Activated B cell treated with CpG ODN at 0.5 μM for 24 hours (primary cell): ENCODE measurements at regions of chr2 and their contacts with region 1.

Region 1: GRCh38 chr2:241734467-241735208 is at the start of gene D2HGDH:
- DNase-seq: peak; percentile 97
- ATAC-seq: peak; percentile 94
- H3K4me3 Mint-ChIP-seq: peak within 1 kb of the TSS; percentile 82
- H3K27ac Mint-ChIP-seq: peak within 1 kb of the TSS; percentile 75
- H3K4me1 Mint-ChIP-seq: peaks cover 57% of the 10 kb centered on the region
- H3K27me3 Mint-ChIP-seq: no peaks in the 10 kb centered on the region
- CTCF ChIP-seq: no peak
- total RNA-seq, gene D2HGDH: 37.7 and 55.4 TPM in 2 replicates

Region 2: DNA sequence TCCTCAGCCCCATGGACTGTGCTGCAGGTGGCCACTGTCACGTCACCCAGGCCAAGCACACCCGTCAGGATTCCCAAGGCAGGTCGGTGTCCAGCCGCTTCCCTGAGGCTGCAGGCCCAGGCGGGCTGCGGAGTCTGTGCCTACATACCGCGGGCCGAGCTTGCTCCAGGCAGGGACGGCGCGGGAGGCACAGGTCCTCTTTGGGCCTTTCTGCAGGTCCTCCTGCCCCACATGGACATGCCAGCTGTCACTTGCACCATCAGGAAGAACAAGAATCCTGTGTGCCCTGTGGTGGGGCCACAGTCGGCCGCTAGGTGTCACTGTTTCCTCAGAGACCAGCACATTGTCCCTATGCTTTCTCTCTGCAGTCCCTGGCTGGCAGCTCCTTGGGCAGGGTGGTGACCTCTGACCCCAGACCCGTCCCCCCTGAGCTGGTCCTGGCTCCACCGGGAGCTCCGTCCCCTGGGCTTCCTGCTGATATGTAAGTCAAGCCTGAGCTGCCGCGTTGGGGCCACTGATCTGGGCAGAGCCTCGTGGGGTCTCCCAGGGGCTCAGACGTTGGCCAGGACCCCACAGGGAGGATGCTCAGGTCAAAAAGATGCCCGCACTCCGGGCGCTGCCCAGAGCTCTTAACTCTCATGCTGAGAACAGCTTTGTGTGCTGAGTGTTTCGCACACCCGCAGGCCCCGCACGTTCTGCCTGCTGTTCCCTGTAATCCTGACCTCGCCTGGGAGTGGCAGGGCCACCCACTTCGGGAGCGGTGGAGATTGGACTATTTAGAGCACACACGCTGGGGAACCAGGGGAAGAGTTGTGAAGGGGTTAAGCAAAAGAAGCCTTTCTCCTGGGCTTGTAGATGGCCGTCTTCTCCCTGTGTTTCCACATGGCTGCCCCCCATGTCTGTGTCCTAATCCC is 883.3 kb before region 1 on chr2:
- CTCF ChIA-PET with region 1: no interaction called
- POLR2A ChIA-PET with region 1: no interaction called
- intact Hi-C with region 1: loop called (anchors 5 kb)
- DNase-seq: peak; percentile 75
- ATAC-seq: peak; percentile 86
- H3K4me3 Mint-ChIP-seq: no peak overlapping the region
- H3K27ac Mint-ChIP-seq: no peak overlapping the region
- H3K4me1 Mint-ChIP-seq: no peaks in the 10 kb centered on the region
- H3K27me3 Mint-ChIP-seq: no peaks in the 10 kb centered on the region
- CTCF ChIP-seq: peak; percentile 65

Region 3: DNA sequence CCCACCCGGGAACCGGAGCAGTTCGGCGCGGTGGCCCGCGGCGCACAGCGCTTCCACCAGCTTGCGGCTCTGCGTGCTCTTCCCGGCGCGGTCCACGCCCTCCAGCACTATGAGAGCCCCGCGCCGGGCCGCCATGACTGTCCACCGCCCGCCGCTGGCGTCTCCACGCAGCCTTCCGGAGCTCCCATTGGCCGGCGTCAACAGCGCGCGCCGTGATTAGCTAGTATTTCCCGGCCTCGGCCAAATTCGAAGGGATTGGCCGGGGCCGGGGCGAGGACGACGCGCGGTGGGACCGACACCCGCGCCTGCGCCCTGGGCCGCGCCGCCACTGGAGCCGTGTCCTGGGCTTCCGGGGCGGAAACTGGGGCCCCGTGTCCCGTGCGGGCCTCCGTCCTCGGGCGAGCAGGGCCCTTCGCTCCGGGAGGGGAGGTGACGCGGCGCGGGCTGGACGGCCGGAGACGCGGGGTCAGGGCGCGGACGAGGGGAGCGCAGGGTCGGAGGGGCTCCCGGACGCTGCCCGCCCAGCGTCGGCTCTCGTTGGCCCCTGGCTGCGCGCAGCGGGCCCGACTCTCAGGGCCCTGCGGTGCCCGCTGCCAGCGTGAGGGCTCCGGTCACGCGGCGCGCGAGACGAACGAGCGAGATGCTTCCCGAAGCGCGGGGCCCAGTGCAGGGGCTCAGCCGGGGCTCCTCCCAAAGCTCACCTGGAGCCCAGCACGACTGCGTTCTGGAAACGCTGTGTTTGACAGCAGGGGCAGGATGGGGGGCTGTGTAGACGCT is 47.8 kb before region 1 on chr2 and contains the start of gene DTYMK:
- CTCF ChIA-PET with region 1: no interaction called
- POLR2A ChIA-PET with region 1: interaction called, 15 read pairs
- intact Hi-C with region 1: loop called (anchors 1 kb)
- DNase-seq: peak; percentile 99
- ATAC-seq: peak; percentile 95
- H3K4me3 Mint-ChIP-seq: peak within 1 kb of the TSS; percentile 80
- H3K27ac Mint-ChIP-seq: peak within 1 kb of the TSS; percentile 87
- H3K4me1 Mint-ChIP-seq: peaks cover 28% of the 10 kb centered on the region
- H3K27me3 Mint-ChIP-seq: no peaks in the 10 kb centered on the region
- CTCF ChIP-seq: no peak
- total RNA-seq, gene DTYMK: 29.2 and 34.7 TPM in 2 replicates

Region 4: GRCh38 chr2:241774646-241775222 is 40.1 kb after region 1 on chr2:
- CTCF ChIA-PET with region 1: no interaction called
- POLR2A ChIA-PET with region 1: interaction called, 4 read pairs
- intact Hi-C with region 1: loop called (anchors 5 kb)
- DNase-seq: no peak
- ATAC-seq: no peak
- H3K4me3 Mint-ChIP-seq: no peak overlapping the region
- H3K27ac Mint-ChIP-seq: no peak overlapping the region
- H3K4me1 Mint-ChIP-seq: peaks cover 14% of the 10 kb centered on the region
- H3K27me3 Mint-ChIP-seq: no peaks in the 10 kb centered on the region
- CTCF ChIP-seq: no peak

Region 5: GRCh38 chr2:241844066-241844728 is 109.6 kb after region 1 on chr2:
- CTCF ChIA-PET with region 1: no interaction called
- POLR2A ChIA-PET with region 1: interaction called, 5 read pairs
- intact Hi-C with region 1: loop called (anchors 1 kb)
- DNase-seq: peak; percentile 79
- ATAC-seq: peak; percentile 91
- H3K4me3 Mint-ChIP-seq: peak overlapping the region; percentile 80
- H3K27ac Mint-ChIP-seq: peak overlapping the region; percentile 66
- H3K4me1 Mint-ChIP-seq: peaks cover 30% of the 10 kb centered on the region
- H3K27me3 Mint-ChIP-seq: no peaks in the 10 kb centered on the region
- CTCF ChIP-seq: no peak